ENCODE measurements at regions of chr2 and their contacts with region 1.

Region 1: GRCh38 chr2:70984576-70985282 is 6.3 kb downstream of the ANKRD53 start:
- DNase-seq: peak in 1 of 2 experiments; percentile 93
- H3K4me3 ChIP-seq: peak overlapping the region in 1 of 4 experiments; percentile 35; a peak in 2 of 8 replicates
- H3K27ac ChIP-seq: no peak overlapping the region
- H3K4me1 ChIP-seq: peaks cover 0 to 6% (median 4%) of the 10 kb centered on the region in 4 experiments; a peak in 4 of 7 replicates
- H3K27me3 ChIP-seq: peaks cover 0 to 4% (median 2%) of the 10 kb centered on the region in 4 experiments; a peak in 5 of 7 replicates
- CTCF ChIP-seq: peak; percentile 90 to 98 (median 91)
- EP300 ChIP-seq: no peak
- POLR2A ChIP-seq: no peak
- RAD21 ChIP-seq: peak; percentile 67 to 78

Region 2: DNA sequence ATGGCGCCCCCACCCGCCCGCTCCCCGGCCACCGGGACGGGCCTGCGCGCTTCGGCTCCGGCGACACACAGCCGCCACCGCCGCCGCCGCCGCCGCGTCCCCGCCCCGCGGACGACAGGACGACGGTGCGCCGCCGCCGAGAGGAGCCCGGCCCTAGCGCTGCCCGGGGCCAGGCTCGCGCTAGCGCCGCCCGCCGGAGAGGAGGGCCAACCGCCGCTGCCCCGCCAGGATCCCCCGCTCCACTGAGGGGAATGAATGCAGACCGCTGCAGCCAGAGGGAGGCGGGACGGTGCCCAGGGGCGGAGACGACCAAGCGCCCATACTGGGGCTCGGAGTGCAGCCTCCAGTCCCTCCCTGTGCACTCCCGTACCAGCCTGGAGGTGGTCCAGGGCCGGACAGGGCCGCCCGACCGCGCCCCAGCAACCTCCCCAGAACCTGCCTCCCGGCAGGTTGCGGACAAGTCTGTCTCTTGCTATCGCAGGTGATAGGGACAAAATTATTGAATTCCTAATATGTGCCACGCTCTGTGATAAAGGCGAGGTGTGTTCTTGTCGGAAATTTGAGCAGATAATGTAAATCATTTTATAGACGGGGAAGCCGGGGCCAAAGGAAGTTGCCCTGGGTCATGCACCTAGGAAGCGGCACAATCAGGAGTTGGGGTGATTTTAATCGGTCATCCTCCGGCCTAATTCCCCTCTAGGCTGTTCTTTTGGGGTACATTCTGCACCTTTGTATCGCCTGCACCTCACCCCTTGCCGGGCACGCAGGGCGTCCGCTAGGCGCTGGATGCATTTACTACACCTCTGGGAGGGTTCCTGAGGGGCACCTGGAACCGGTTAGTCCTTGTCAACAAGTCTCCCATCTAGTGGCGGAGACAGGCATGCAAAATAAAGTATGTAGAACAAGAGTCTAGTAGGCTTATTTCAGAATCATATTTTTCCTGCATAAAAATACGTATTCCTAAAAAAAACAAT is 10.3 kb after region 1 on chr2 and contains the start of gene TEX261:
- CTCF ChIA-PET with region 1: interaction called, 21 read pairs
- POLR2A ChIA-PET with region 1: no interaction called
- DNase-seq: peak in 1 of 2 experiments; percentile 98
- H3K4me3 ChIP-seq: peak within 1 kb of the TSS; percentile 71 to 90 (median 76)
- H3K27ac ChIP-seq: no peak within 1 kb of the TSS
- H3K4me1 ChIP-seq: peaks cover 0 to 5% (median 3%) of the 10 kb centered on the region in 4 experiments; a peak in 3 of 7 replicates
- H3K27me3 ChIP-seq: peaks cover 0 to 7% (median 0%) of the 10 kb centered on the region in 4 experiments; a peak in 3 of 7 replicates
- CTCF ChIP-seq: peak; percentile 77 to 86 (median 85)
- EP300 ChIP-seq: peak in 1 of 2 experiments; percentile 54; a peak in 1 of 3 replicates
- POLR2A ChIP-seq: no peak
- RAD21 ChIP-seq: peak in 1 of 2 experiments; percentile 19; a peak in 1 of 4 replicates
- total RNA-seq, gene TEX261: 24.3 and 25.2 TPM in 2 replicates

Region 3: GRCh38 chr2:71000780-71001591 is 16.3 kb after region 1 on chr2:
- CTCF ChIA-PET with region 1: interaction called, 17 read pairs
- POLR2A ChIA-PET with region 1: interaction called, 7 read pairs
- DNase-seq: peak in 1 of 2 experiments; percentile 86
- H3K4me3 ChIP-seq: peak overlapping the region in 2 of 4 experiments; percentile 20 to 46; a peak in 3 of 8 replicates
- H3K27ac ChIP-seq: no peak overlapping the region
- H3K4me1 ChIP-seq: peaks cover 3 to 11% (median 7%) of the 10 kb centered on the region in 4 experiments; a peak in 5 of 7 replicates
- H3K27me3 ChIP-seq: peaks cover 0 to 7% (median 0%) of the 10 kb centered on the region in 4 experiments; a peak in 4 of 7 replicates
- CTCF ChIP-seq: peak; percentile 88 to 94 (median 90)
- EP300 ChIP-seq: no peak
- POLR2A ChIP-seq: no peak
- RAD21 ChIP-seq: peak; percentile 31 to 55; a peak in 3 of 4 replicates

Region 4: GRCh38 chr2:71006955-71007799 is 22.4 kb after region 1 on chr2:
- CTCF ChIA-PET with region 1: interaction called, 21 read pairs
- POLR2A ChIA-PET with region 1: interaction called, 7 read pairs
- DNase-seq: no peak
- H3K4me3 ChIP-seq: no peak overlapping the region
- H3K27ac ChIP-seq: no peak overlapping the region
- H3K4me1 ChIP-seq: peaks cover 0 to 5% (median under 1%) of the 10 kb centered on the region in 4 experiments; a peak in 3 of 7 replicates
- H3K27me3 ChIP-seq: no peaks in the 10 kb centered on the region; a peak in 1 of 7 replicates
- CTCF ChIP-seq: peak in 2 of 3 experiments; percentile 17 to 32; a peak in 1 of 4 replicates
- EP300 ChIP-seq: no peak
- POLR2A ChIP-seq: no peak
- RAD21 ChIP-seq: no peak